SK-N-SH (cell line): ENCODE measurements at regions of chr16 and their contacts with region 1.

Region 1: DNA sequence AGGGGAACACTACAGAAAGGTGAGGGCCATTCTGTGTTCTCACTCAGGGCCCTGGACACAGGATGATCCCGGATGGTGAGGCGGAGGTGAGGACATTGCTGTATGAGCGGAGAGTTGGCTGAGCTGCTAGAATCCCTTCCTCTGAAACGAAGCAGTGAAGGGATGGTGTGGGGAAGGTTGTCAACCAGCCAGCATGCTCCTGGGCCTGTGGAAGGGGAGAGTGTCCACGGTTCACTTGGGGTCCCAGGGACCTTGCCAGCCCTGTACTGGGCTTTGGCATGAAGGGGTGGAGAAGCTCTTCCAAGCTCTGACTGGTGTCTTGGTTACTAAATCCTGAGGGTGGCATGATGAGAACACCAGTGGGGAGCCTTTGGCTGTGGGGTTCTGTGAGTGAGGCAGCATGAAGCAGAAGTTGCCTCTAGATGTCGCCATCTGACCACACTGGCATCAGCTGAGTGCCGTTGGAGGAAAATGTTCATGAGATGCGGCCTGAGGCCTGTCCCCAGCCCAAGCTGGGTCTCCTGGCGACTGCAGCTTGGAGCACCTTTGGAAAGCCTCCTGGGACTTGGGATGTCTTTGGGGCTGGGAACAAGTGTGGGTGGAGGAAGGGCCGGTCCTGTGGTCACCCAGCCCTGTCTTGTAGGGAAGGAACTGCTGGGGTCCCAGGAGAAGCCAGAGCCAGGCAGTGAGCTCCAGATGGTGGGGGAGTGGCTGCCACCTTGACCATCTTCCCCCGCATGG is 14.8 kb downstream of the PDP2 start:
- DNase-seq: peak; percentile 76
- H3K4me3 ChIP-seq: no peak overlapping the region; a peak in 1 of 4 replicates
- H3K27ac ChIP-seq: no peak overlapping the region
- H3K4me1 ChIP-seq: peaks cover 9 to 11% of the 10 kb centered on the region in 2 experiments; a peak in 3 of 4 replicates
- H3K27me3 ChIP-seq: no peaks in the 10 kb centered on the region
- CTCF ChIP-seq: peak; percentile 89
- EP300 ChIP-seq: no peak
- RAD21 ChIP-seq: peak; percentile 98

Region 2: GRCh38 chr16:66905633-66906539 is 10.8 kb after region 1 on chr16:
- CTCF ChIA-PET with region 1: interaction called, 41 read pairs
- POLR2A ChIA-PET with region 1: no interaction called
- DNase-seq: peak; percentile 41
- H3K4me3 ChIP-seq: no peak overlapping the region
- H3K27ac ChIP-seq: no peak overlapping the region
- H3K4me1 ChIP-seq: peaks cover 2% of the 10 kb centered on the region in 2 experiments; a peak in 2 of 4 replicates
- H3K27me3 ChIP-seq: no peaks in the 10 kb centered on the region
- CTCF ChIP-seq: no peak
- EP300 ChIP-seq: no peak
- RAD21 ChIP-seq: no peak

Region 3: DNA sequence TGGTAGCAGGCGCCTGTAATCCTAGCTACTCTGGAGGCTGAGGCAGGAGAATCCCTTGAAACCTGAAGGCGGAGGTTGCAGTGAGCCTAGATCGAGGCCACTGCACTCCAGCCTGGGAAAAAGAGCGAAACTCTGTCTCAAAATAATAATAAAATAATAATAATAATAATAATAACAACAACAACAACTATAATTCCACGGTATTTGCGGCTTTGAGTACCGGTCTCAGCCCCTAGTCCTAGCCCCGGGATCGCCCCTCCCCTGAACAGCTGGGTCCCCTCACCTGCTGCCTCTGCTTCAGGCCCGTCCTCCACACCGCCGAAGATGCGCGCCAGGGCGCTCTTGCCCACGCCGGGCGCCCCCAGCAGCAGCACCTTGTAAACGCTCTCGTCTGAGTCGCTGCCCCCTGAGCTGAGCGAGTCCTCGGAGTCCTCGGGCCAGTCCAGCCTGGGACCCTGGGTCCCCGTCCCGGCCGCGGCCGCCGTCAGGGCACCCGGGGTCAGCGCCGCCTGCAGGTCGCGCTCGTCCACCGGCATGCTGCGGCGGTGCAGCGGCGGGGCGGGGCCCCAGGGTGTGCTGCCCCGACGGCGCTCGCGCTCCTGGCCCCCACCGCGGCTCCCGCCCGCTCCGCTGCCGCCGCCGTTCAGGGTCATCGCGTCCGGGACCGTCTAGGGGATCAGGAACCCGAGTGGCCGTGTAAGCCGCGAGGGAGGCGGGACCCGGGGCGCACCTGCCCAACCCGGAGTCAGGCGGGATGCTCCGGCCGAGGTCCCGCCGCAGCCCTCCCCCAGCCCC is 29.6 kb after region 1 on chr16:
- CTCF ChIA-PET with region 1: interaction called, 174 read pairs
- POLR2A ChIA-PET with region 1: interaction called, 6 read pairs
- DNase-seq: peak; percentile 94
- H3K4me3 ChIP-seq: peak overlapping the region in 1 of 2 experiments; percentile 37; a peak in 2 of 4 replicates
- H3K27ac ChIP-seq: no peak overlapping the region
- H3K4me1 ChIP-seq: peaks cover 4 to 13% of the 10 kb centered on the region in 2 experiments; a peak in 3 of 4 replicates
- H3K27me3 ChIP-seq: no peaks in the 10 kb centered on the region
- CTCF ChIP-seq: peak; percentile 50
- EP300 ChIP-seq: no peak
- RAD21 ChIP-seq: 0 out of 2 replicates have a peak, but pooled peaks have one; percentile 18

Region 4: GRCh38 chr16:66940226-66940625 is 45.1 kb after region 1 on chr16:
- CTCF ChIA-PET with region 1: interaction called, 20 read pairs
- POLR2A ChIA-PET with region 1: no interaction called
- DNase-seq: no peak
- H3K4me3 ChIP-seq: no peak overlapping the region
- H3K27ac ChIP-seq: no peak overlapping the region
- H3K4me1 ChIP-seq: peaks cover 0 to 11% of the 10 kb centered on the region in 2 experiments; a peak in 1 of 4 replicates
- H3K27me3 ChIP-seq: no peaks in the 10 kb centered on the region
- CTCF ChIP-seq: no peak
- EP300 ChIP-seq: no peak
- RAD21 ChIP-seq: no peak

Region 5: GRCh38 chr16:66954097-66954659 is 59.1 kb after region 1 on chr16:
- CTCF ChIA-PET with region 1: interaction called, 12 read pairs
- POLR2A ChIA-PET with region 1: no interaction called
- DNase-seq: peak; percentile 83
- H3K4me3 ChIP-seq: peak overlapping the region in 1 of 2 experiments; percentile 23; a peak in 1 of 4 replicates
- H3K27ac ChIP-seq: no peak overlapping the region
- H3K4me1 ChIP-seq: no peaks in the 10 kb centered on the region
- H3K27me3 ChIP-seq: no peaks in the 10 kb centered on the region
- CTCF ChIP-seq: peak; percentile 87
- EP300 ChIP-seq: no peak
- RAD21 ChIP-seq: peak; percentile 91